ENCODE measurements at regions of chr17 and their contacts with region 1.

Region 1: GRCh38 chr17:996554-997344 is at the start of gene TIMM22:
- DNase-seq: peak; percentile 84 to 98 (median 92)
- ATAC-seq: peak; percentile 93
- H3K4me3 ChIP-seq: peak within 1 kb of the TSS; percentile 86 to 97
- H3K4me3 Mint-ChIP-seq: peak within 1 kb of the TSS; percentile 99
- H3K27ac ChIP-seq: peak within 1 kb of the TSS; percentile 70 to 90
- H3K27ac Mint-ChIP-seq: peak within 1 kb of the TSS; percentile 97
- H3K4me1 ChIP-seq: peaks cover 9% of the 10 kb centered on the region
- H3K4me1 Mint-ChIP-seq: peaks cover 24% of the 10 kb centered on the region
- H3K27me3 ChIP-seq: no peaks in the 10 kb centered on the region
- H3K27me3 Mint-ChIP-seq: no peaks in the 10 kb centered on the region
- CTCF ChIP-seq: peak; percentile 90
- total RNA-seq, gene TIMM22: 13.2 to 14.0 TPM

Region 2: DNA sequence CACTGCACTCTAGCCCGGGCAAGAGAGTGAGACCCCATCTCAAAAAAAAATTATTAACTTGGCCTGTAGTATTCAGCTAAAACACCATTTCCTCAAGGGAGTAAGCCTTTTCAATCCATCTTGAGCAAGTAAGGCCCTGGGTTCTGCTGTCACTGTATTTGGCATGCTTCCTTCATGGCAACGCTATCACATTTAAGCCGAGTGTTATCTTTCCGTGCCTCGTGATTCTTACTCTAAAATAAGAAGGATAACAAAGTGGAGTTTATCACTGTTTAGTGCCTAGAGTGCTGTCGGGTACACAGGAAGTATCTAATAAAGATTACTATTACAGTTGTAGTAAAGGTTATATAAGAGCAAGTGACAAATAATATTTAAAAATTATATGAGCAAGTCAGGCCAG is 290.9 kb before region 1 on chr17:
- CTCF ChIA-PET with region 1: no interaction called
- POLR2A ChIA-PET with region 1: no interaction called
- intact Hi-C with region 1: loop called in 1 of 2 experiments (anchors 5 kb)
- DNase-seq: no peak
- ATAC-seq: no peak
- H3K4me3 ChIP-seq: no peak overlapping the region
- H3K4me3 Mint-ChIP-seq: no peak overlapping the region
- H3K27ac ChIP-seq: no peak overlapping the region
- H3K27ac Mint-ChIP-seq: no peak overlapping the region
- H3K4me1 ChIP-seq: no peaks in the 10 kb centered on the region
- H3K4me1 Mint-ChIP-seq: peaks cover 18% of the 10 kb centered on the region
- H3K27me3 ChIP-seq: no peaks in the 10 kb centered on the region
- H3K27me3 Mint-ChIP-seq: no peaks in the 10 kb centered on the region
- CTCF ChIP-seq: no peak

Region 3: DNA sequence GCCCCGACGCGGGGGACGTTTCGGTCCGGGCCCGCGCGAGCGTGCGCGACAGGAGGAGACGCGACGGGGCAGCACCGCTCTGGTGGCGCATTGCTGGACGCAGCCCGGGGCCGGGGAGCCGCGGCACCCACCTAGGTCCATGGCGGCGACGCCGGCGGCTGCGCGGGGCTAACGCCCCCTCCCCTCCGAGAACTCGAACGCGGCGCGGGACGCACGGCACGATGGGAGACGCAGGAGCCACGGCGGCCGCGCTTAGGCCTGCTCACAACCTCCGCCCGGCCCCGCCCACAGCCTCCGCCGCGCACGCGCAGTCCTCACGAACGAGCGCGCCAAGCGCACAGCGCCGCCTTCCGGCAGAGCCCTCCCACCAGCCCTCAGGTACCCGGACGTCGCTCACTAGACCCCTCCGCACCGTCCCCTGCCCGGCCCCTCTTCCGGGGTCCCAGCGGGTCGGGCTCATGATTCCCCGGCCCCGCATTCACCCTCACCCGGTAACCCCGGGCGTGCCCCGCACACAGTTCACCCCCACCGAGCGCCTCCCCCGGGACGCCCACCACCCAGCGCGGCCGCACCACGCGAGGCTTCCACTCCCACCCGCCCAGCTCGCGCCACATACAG is 244.6 kb before region 1 on chr17 and contains the start of gene GEMIN4:
- CTCF ChIA-PET with region 1: interaction called, 5 read pairs
- POLR2A ChIA-PET with region 1: interaction called, 4 read pairs
- intact Hi-C with region 1: loop called in 1 of 2 experiments (anchors 1 kb)
- DNase-seq: peak; percentile 94 to 100 (median 98)
- ATAC-seq: peak; percentile 89
- H3K4me3 ChIP-seq: peak within 1 kb of the TSS; percentile 77 to 94
- H3K4me3 Mint-ChIP-seq: peak within 1 kb of the TSS; percentile 96
- H3K27ac ChIP-seq: peak within 1 kb of the TSS; percentile 60 to 65
- H3K27ac Mint-ChIP-seq: peak within 1 kb of the TSS; percentile 97
- H3K4me1 ChIP-seq: peaks cover 28% of the 10 kb centered on the region
- H3K4me1 Mint-ChIP-seq: peaks cover 41% of the 10 kb centered on the region
- H3K27me3 ChIP-seq: no peaks in the 10 kb centered on the region
- H3K27me3 Mint-ChIP-seq: no peaks in the 10 kb centered on the region
- CTCF ChIP-seq: peak; percentile 86
- total RNA-seq, gene GEMIN4: 19.1 to 19.2 TPM

Region 4: DNA sequence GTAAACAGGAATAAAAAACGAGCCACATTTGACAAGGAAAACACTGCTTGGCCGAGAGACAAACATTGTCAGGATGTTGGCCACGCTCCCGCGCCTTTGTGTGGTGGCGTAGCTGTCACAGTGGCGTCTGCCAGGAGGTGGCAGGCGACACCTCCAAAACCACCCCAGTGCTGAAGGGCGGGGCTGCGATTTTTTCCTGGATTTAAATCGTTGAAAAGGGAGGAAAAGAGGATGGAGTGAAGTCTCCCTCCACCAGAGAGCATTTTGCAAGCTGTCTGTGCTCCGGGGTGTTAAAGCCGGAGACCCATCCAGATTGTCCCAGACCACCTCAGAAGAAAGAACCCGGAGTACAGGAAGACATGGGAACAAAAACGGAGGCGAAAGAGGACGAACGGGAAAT is 201.9 kb before region 1 on chr17:
- CTCF ChIA-PET with region 1: interaction called, 7 read pairs
- POLR2A ChIA-PET with region 1: interaction called, 6 read pairs
- intact Hi-C with region 1: loop called in 1 of 2 experiments (anchors 1 kb)
- DNase-seq: peak in 8 of 9 experiments; percentile 6 to 65 (median 42)
- ATAC-seq: peak; percentile 76
- H3K4me3 ChIP-seq: no peak overlapping the region
- H3K4me3 Mint-ChIP-seq: no peak overlapping the region
- H3K27ac ChIP-seq: no peak overlapping the region
- H3K27ac Mint-ChIP-seq: no peak overlapping the region
- H3K4me1 ChIP-seq: no peaks in the 10 kb centered on the region
- H3K4me1 Mint-ChIP-seq: peaks cover 5% of the 10 kb centered on the region
- H3K27me3 ChIP-seq: no peaks in the 10 kb centered on the region
- H3K27me3 Mint-ChIP-seq: no peaks in the 10 kb centered on the region
- CTCF ChIP-seq: peak; percentile 64

Region 5: GRCh38 chr17:979538-980405 is 17.0 kb before region 1 on chr17 and contains the start of gene NXN:
- CTCF ChIA-PET with region 1: interaction called, 31 read pairs
- POLR2A ChIA-PET with region 1: interaction called, 18 read pairs
- intact Hi-C with region 1: loop called (anchors 1 kb)
- DNase-seq: peak; percentile 81 to 96 (median 90)
- ATAC-seq: peak; percentile 86
- H3K4me3 ChIP-seq: peak within 1 kb of the TSS; percentile 53 to 58
- H3K4me3 Mint-ChIP-seq: peak within 1 kb of the TSS; percentile 78
- H3K27ac ChIP-seq: no peak within 1 kb of the TSS
- H3K27ac Mint-ChIP-seq: peak within 1 kb of the TSS; percentile 15
- H3K4me1 ChIP-seq: peaks cover 18% of the 10 kb centered on the region
- H3K4me1 Mint-ChIP-seq: peaks cover 19% of the 10 kb centered on the region
- H3K27me3 ChIP-seq: peaks cover 16 to 17% of the 10 kb centered on the region in 2 experiments
- H3K27me3 Mint-ChIP-seq: peaks cover 32% of the 10 kb centered on the region
- CTCF ChIP-seq: no peak
- total RNA-seq, gene NXN: 0.17 to 0.95 TPM

Region 6: GRCh38 chr17:1019451-1019850 is 22.7 kb after region 1 on chr17:
- CTCF ChIA-PET with region 1: no interaction called
- POLR2A ChIA-PET with region 1: no interaction called
- intact Hi-C with region 1: no loop called
- DNase-seq: no peak
- ATAC-seq: no peak
- H3K4me3 ChIP-seq: no peak overlapping the region
- H3K4me3 Mint-ChIP-seq: no peak overlapping the region
- H3K27ac ChIP-seq: no peak overlapping the region
- H3K27ac Mint-ChIP-seq: no peak overlapping the region
- H3K4me1 ChIP-seq: no peaks in the 10 kb centered on the region
- H3K4me1 Mint-ChIP-seq: no peaks in the 10 kb centered on the region
- H3K27me3 ChIP-seq: no peaks in the 10 kb centered on the region
- H3K27me3 Mint-ChIP-seq: no peaks in the 10 kb centered on the region
- CTCF ChIP-seq: no peak

Region 7: GRCh38 chr17:1047177-1047878 is 50.6 kb after region 1 on chr17:
- CTCF ChIA-PET with region 1: no interaction called
- POLR2A ChIA-PET with region 1: no interaction called
- intact Hi-C with region 1: no loop called
- DNase-seq: no peak
- ATAC-seq: no peak
- H3K4me3 ChIP-seq: no peak overlapping the region
- H3K4me3 Mint-ChIP-seq: no peak overlapping the region
- H3K27ac ChIP-seq: no peak overlapping the region
- H3K27ac Mint-ChIP-seq: no peak overlapping the region
- H3K4me1 ChIP-seq: no peaks in the 10 kb centered on the region
- H3K4me1 Mint-ChIP-seq: no peaks in the 10 kb centered on the region
- H3K27me3 ChIP-seq: no peaks in the 10 kb centered on the region
- H3K27me3 Mint-ChIP-seq: no peaks in the 10 kb centered on the region
- CTCF ChIP-seq: no peak

Measured in CD8-positive, alpha-beta T cell (primary cell).